ENCODE measurements at regions of chr13 and their contacts with region 1.

Region 1: DNA sequence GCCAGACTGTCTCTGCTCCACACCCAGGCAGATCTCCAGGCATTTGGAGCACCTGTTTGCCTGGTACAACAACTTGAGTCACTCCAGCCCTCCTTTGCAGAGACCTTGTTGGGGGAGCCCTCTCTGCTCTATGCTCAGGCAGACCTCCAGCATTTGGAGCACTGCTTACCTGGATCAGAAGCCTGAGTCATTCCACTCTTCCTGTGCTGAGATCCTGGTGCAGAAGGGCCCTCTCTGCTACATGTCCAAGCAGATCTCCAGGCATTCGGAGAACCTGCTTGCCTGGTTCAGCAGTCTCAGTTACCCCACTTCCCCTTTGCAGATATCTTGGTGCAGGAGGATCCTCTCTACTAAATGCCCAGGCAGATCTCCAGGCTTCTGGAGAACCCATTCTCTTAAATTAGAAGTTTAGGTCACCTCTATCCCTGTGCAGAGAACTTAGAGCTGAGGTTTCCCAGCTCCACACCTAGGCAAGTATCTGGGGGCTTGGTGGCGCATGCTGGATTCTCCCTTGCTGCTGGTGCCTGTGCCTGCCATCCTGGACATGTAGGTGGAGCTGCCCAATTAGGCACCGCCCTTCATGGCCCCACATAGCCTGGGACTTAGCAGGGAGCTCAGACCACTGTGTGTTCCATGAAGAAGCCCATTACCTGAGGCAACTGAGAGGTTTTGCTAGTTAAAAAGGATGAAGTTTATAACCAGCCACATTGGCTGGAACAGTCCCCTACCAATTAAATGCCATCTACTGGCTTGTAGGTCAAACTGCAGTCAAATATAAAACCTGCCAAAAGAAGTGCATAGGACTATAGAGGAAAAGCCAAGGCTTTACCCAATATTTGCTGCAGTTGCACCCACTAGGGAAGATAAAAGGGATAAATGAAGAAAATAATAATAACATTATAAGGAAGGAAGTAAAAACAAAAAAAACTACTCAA is 97.6 kb upstream of the SLITRK6 start:
- DNase-seq: no peak
- H3K4me3 ChIP-seq: no peak overlapping the region
- H3K27ac ChIP-seq: no peak overlapping the region
- H3K4me1 ChIP-seq: no peaks in the 10 kb centered on the region
- H3K27me3 ChIP-seq: no peaks in the 10 kb centered on the region
- CTCF ChIP-seq: no peak
- POLR2A ChIP-seq: no peak

Region 2: DNA sequence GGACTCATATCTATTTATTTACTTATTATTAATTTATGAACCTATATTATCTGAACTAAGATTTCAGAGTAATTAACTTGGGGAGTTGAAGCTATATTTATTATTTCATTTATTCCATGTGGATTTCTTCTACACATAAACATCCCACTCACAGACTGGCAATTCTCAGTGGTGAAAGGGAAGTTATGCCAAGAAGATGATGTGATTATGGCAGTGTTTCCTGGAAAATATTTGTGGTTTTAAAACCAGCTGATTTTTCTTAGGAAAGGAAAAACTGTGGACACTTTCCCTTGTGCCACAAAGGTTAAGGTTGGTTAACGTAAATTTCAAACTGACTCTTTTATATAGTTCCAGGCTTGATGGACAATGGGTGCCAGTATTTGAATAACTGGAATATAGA is 610.7 kb before region 1 on chr13:
- intact Hi-C with region 1: no loop called
- DNase-seq: no peak
- H3K4me3 ChIP-seq: no peak overlapping the region
- H3K27ac ChIP-seq: no peak overlapping the region
- H3K4me1 ChIP-seq: no peaks in the 10 kb centered on the region
- H3K27me3 ChIP-seq: no peaks in the 10 kb centered on the region
- CTCF ChIP-seq: no peak
- POLR2A ChIP-seq: no peak

Region 3: GRCh38 chr13:85864963-85865530 is 31.7 kb before region 1 on chr13:
- intact Hi-C with region 1: no loop called
- DNase-seq: no peak
- H3K4me3 ChIP-seq: no peak overlapping the region
- H3K27ac ChIP-seq: no peak overlapping the region
- H3K4me1 ChIP-seq: no peaks in the 10 kb centered on the region
- H3K27me3 ChIP-seq: no peaks in the 10 kb centered on the region
- CTCF ChIP-seq: no peak
- POLR2A ChIP-seq: no peak

Region 4: GRCh38 chr13:86051134-86052103 is 154.6 kb after region 1 on chr13:
- intact Hi-C with region 1: loop called (anchors 5 kb)
- DNase-seq: no peak
- H3K4me3 ChIP-seq: no peak overlapping the region
- H3K27ac ChIP-seq: no peak overlapping the region
- H3K4me1 ChIP-seq: no peaks in the 10 kb centered on the region
- H3K27me3 ChIP-seq: no peaks in the 10 kb centered on the region
- CTCF ChIP-seq: no peak
- POLR2A ChIP-seq: no peak